ENCODE measurements at regions of chr3 and their contacts with region 1.

Region 1: GRCh38 chr3:8769088-8769822 is at the start of gene OXTR:
- DNase-seq: peak; percentile 42 to 78 (median 69)
- H3K4me3 ChIP-seq: no peak within 1 kb of the TSS
- H3K27ac ChIP-seq: no peak within 1 kb of the TSS
- H3K4me1 ChIP-seq: peaks cover 11% of the 10 kb centered on the region
- H3K27me3 ChIP-seq: no peaks in the 10 kb centered on the region
- CTCF ChIP-seq: peak; percentile 74 to 94 (median 87)
- EP300 ChIP-seq: no peak
- POLR2A ChIP-seq: no peak
- total RNA-seq, gene OXTR: 0.27 to 14.9 (median 1.1) TPM

Region 2: DNA sequence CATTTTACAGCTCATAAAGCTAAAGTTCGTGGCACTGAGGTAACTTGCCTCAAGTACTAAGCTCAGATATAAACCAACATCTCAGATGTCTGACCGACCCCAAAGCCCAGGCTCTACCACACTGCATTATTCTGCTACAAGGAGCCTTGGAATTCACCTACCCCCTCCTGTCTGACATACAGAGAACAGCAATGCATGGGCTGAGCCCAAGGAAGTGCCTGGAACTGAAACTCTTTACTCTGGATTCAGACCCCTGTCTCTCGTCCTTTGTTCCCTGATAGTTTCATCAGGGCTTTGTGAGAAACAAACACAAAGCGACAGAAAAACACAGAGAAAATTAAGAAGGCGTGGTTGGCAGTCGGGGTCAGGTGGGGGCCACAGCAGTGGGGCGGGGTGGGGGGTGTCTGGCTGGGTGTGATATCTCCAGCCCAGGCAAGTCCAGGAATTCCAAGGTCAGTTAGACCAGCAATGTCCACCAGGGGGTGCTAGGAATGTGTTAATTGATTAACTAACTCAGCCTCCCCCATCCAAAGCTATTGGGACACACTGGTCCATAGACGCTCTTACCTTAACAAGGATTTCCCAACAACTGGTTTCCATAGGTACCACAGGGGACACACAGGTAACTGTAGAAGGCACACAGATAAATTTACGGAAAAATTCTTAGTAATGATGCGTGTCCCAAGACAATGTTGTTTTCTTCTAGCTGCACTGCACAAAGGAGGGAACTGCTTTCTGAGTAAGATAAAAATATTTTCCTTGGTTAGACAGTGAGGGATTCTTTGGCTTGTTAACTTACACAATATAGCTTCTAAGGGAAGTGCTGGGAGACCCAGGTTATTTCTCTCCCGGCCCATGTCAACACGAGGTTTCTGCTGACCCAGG is 105.8 kb before region 1 on chr3:
- intact Hi-C with region 1: loop called in 2 of 4 experiments (anchors 10 kb)
- DNase-seq: peak; percentile 55 to 77 (median 63)
- H3K4me3 ChIP-seq: no peak overlapping the region
- H3K27ac ChIP-seq: no peak overlapping the region
- H3K4me1 ChIP-seq: peaks cover 18% of the 10 kb centered on the region
- H3K27me3 ChIP-seq: no peaks in the 10 kb centered on the region
- CTCF ChIP-seq: peak in 1 of 3 donors; percentile 18
- EP300 ChIP-seq: no peak
- POLR2A ChIP-seq: no peak

Region 3: DNA sequence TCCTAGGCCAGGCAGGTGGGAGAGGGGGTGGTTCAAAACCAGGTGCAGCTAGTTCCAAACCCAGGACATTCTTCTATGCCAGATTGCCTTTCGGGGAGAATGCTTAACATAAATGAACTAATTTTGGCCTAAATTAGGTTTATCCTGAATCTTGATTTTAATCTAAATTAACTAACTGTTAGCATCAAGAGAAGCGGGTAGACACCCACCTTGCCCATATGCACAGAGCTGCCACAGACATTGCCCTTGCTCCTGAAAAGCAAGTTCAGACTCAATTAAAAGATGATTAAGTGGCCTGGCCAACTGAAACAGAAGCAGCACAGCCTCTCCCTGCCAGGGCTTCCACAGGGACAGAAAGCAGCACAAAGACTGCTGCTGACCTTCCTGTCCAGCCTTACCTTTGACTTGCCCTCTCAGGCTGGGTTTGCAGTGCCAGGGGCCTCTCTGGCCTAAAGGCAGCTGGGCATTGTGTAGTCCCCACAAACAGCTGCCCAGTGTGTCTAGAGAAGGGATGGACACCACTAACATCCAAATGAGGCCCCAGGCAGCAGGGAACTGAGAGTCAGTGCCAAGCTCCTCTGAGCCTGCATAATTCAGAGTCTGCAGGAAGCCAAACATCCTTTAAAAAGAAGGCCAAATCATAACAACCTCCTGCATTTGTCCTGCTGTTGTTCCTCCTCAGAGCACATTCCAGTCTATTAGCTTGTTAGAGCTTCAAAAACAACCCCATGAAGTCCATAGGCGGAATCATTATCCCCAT is 15.6 kb after region 1 on chr3:
- intact Hi-C with region 1: no loop called
- DNase-seq: no peak
- H3K4me3 ChIP-seq: no peak overlapping the region
- H3K27ac ChIP-seq: no peak overlapping the region
- H3K4me1 ChIP-seq: no peaks in the 10 kb centered on the region
- H3K27me3 ChIP-seq: no peaks in the 10 kb centered on the region
- CTCF ChIP-seq: no peak
- EP300 ChIP-seq: no peak
- POLR2A ChIP-seq: no peak

Region 4: DNA sequence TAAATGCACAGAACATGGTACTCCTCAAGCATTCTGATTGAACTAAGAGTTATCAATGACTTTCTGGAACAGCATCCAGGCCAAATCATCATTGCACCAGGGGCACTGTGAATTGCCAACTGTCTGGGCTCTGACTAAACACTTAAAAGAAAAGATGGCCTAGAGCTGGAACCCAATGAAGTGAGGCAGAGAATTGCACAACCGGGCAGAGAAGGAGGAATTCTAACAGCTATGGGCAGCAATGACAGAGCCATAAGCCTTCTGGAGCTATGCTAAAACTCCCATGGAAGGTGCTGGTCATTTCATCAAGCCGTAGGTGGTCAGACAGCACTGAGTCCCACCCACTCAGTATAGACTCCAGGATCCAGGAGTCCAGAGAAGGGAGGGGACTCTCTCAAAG is 48.2 kb after region 1 on chr3:
- intact Hi-C with region 1: loop called in 1 of 4 experiments (anchors 1 kb)
- DNase-seq: no peak
- H3K4me3 ChIP-seq: no peak overlapping the region
- H3K27ac ChIP-seq: no peak overlapping the region
- H3K4me1 ChIP-seq: no peaks in the 10 kb centered on the region
- H3K27me3 ChIP-seq: no peaks in the 10 kb centered on the region
- CTCF ChIP-seq: no peak
- EP300 ChIP-seq: no peak
- POLR2A ChIP-seq: no peak

Region 5: GRCh38 chr3:8882171-8882593 is 112.9 kb after region 1 on chr3:
- intact Hi-C with region 1: no loop called
- DNase-seq: no peak
- H3K4me3 ChIP-seq: no peak overlapping the region
- H3K27ac ChIP-seq: no peak overlapping the region
- H3K4me1 ChIP-seq: peaks cover 1% of the 10 kb centered on the region
- H3K27me3 ChIP-seq: no peaks in the 10 kb centered on the region
- CTCF ChIP-seq: no peak
- EP300 ChIP-seq: no peak
- POLR2A ChIP-seq: no peak